ENCODE measurements at regions of chr6 and their contacts with region 1.

Region 1: DNA sequence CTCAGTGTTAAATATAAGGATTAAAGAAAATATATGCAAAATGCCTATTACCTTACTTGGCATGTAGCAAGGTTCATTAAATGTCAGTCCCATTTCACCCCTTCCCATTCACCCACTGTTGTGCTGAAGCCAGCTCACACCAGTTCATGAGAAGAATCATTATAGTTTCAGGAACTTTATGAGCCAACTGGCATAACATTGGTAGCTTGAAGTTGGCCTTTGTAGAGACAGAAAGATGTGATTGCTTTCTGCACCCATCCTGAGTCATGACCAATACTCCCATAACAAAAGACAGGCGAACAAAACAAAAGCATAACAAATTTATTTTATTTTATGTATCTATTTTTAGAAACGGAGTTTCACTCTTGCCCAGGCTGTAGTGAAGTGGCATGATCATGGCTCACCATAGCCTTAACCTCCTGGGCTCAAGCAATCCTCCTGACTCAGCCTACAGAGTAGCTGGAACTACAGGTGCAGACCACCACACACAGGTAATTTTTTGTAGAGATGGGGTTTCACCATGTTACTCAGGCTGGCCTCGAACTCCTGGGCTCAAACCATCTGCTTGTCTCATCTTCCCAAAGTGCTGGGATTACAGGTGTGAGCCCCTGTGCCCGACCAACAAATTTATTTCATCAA is 17.6 kb upstream of the IER3 start:
- DNase-seq: no peak
- ATAC-seq: peak; percentile 68
- H3K4me3 Mint-ChIP-seq: no peak overlapping the region
- H3K27ac Mint-ChIP-seq: peak overlapping the region; percentile 1
- H3K4me1 Mint-ChIP-seq: peaks cover 60% of the 10 kb centered on the region
- H3K27me3 Mint-ChIP-seq: no peaks in the 10 kb centered on the region
- CTCF ChIP-seq: no peak

Region 2: DNA sequence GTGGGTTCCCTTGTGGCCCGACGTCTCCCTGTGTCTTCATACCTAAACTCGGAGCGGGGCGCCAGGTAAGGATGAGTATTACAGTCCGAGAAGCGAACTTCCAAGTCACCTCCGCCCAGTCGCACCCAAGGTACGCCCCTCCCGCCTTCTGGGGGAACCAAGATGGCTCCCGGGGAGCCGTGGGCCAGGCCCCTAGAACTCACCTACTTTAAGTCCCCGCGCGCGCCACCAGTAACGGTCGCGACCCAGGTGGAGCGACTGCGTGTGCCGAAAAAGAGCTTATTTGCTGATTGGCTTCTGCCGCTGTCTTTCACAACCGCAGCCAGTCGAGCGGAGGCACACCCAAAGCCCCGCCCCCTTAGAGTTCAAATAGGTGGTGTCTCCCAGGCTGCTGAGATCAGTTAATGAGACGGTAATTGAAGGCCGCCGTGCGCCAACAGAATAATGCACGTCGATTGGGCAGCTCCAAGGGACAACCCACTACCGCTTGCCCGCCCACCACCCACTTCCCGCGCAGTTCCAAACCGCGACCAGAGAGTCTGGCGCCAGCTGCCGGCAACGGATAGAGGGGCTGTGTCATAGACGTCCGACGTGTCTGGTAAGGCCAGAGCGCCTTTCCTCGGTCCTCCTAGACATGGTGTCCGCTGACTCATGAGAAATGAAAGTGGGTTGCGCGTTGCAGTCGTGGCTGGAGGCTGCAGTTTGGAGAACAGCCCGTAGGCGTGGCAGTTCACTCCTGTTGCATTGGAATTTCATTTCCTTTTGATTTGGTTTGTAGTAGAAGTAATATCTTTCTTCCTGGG is 44.7 kb before region 1 on chr6 and contains the start of gene MDC1:
- CTCF ChIA-PET with region 1: no interaction called
- POLR2A ChIA-PET with region 1: no interaction called
- intact Hi-C with region 1: no loop called
- DNase-seq: peak; percentile 100
- ATAC-seq: peak; percentile 78
- H3K4me3 Mint-ChIP-seq: peak within 1 kb of the TSS; percentile 80
- H3K27ac Mint-ChIP-seq: peak within 1 kb of the TSS; percentile 99
- H3K4me1 Mint-ChIP-seq: peaks cover 37% of the 10 kb centered on the region
- H3K27me3 Mint-ChIP-seq: no peaks in the 10 kb centered on the region
- CTCF ChIP-seq: no peak
- total RNA-seq, gene MDC1: 80.4 to 90.7 TPM

Region 3: GRCh38 chr6:30742316-30743098 is 19.4 kb before region 1 on chr6 and contains the start of gene FLOT1:
- CTCF ChIA-PET with region 1: interaction called, 9 read pairs
- POLR2A ChIA-PET with region 1: interaction called, 198 read pairs
- intact Hi-C with region 1: no loop called
- DNase-seq: peak; percentile 99
- ATAC-seq: peak; percentile 77
- H3K4me3 Mint-ChIP-seq: peak within 1 kb of the TSS; percentile 99
- H3K27ac Mint-ChIP-seq: peak within 1 kb of the TSS; percentile 94
- H3K4me1 Mint-ChIP-seq: peaks cover 67% of the 10 kb centered on the region
- H3K27me3 Mint-ChIP-seq: no peaks in the 10 kb centered on the region
- CTCF ChIP-seq: no peak
- total RNA-seq, gene FLOT1: 135 TPM

Region 4: GRCh38 chr6:30955367-30956042 is 193.6 kb after region 1 on chr6:
- CTCF ChIA-PET with region 1: no interaction called
- POLR2A ChIA-PET with region 1: no interaction called
- intact Hi-C with region 1: no loop called
- DNase-seq: peak; percentile 88
- ATAC-seq: peak; percentile 90
- H3K4me3 Mint-ChIP-seq: peak overlapping the region; percentile 76
- H3K27ac Mint-ChIP-seq: peak overlapping the region; percentile 58
- H3K4me1 Mint-ChIP-seq: peaks cover 22% of the 10 kb centered on the region
- H3K27me3 Mint-ChIP-seq: peaks cover 33% of the 10 kb centered on the region
- CTCF ChIP-seq: no peak